ENCODE measurements at regions of chr5 and their contacts with region 1.

Region 1: GRCh38 chr5:64784451-64785025 is 15.8 kb downstream of the CWC27 start:
- DNase-seq: peak; percentile 80
- ATAC-seq: peak; percentile 68
- H3K4me3 Mint-ChIP-seq: no peak overlapping the region
- H3K27ac Mint-ChIP-seq: no peak overlapping the region
- H3K4me1 Mint-ChIP-seq: peaks cover 10% of the 10 kb centered on the region
- H3K27me3 Mint-ChIP-seq: no peaks in the 10 kb centered on the region

Region 2: DNA sequence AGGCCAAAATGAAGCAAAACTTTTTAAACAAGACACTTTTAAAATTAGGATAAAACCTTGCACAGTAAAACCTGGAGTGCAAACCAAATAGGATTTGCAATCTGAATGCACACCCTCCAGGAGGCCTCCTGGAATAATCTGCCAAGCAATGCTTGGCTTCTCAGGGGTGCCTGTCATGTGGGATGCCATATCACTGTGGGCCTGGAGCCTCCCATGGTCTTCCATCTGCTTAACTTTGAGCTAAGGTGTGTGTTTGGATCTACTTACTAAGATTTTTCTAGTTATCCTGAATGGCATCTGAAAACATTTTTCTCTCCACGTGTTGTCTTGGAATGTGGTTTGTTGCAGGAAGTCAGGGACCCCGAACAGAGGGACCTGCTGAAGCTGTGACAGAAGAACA is 226.6 kb before region 1 on chr5:
- CTCF ChIA-PET with region 1: no interaction called
- DNase-seq: no peak
- ATAC-seq: no peak
- H3K4me3 Mint-ChIP-seq: no peak overlapping the region
- H3K27ac Mint-ChIP-seq: no peak overlapping the region
- H3K4me1 Mint-ChIP-seq: no peaks in the 10 kb centered on the region
- H3K27me3 Mint-ChIP-seq: no peaks in the 10 kb centered on the region

Region 3: DNA sequence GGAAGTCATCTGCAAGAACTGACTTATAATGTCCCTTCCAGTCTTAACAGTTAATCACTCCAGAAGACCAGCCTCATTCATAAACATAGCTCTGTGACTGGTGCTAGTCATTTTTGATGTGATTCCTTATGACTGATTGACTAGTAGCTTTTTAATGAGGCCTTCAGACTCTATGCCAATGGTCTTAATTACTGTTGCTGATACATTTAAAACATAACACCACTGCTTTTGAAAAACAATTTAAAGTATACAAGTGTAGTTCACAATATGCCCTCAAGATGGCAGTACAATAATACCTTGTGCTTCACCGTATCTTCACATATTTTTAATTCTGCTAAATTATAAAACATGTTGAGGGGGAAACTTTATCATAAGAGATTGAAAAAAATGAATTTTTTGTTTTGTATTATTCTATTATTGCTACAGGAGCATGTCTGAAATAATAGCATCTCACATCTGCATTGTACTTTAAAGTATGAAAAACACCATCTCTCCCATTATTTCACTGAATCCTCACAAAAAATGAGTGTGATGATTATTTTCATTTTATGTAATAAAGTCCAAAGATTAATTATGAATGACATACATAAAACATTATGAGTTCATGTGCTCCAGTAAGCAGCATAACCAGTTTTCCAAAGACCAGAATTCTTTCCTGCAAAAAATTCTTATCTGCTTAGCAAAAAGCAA is 149.4 kb before region 1 on chr5:
- CTCF ChIA-PET with region 1: interaction called, 41 read pairs
- DNase-seq: no peak
- ATAC-seq: no peak
- H3K4me3 Mint-ChIP-seq: no peak overlapping the region
- H3K27ac Mint-ChIP-seq: no peak overlapping the region
- H3K4me1 Mint-ChIP-seq: peaks cover 11% of the 10 kb centered on the region
- H3K27me3 Mint-ChIP-seq: peaks cover 35% of the 10 kb centered on the region

Region 4: GRCh38 chr5:64768358-64769312 is 15.9 kb before region 1 on chr5 and contains the starts of genes CWC27 and SREK1IP1:
- CTCF ChIA-PET with region 1: interaction called, 21 read pairs
- DNase-seq: peak; percentile 91
- ATAC-seq: peak; percentile 96
- H3K4me3 Mint-ChIP-seq: peak within 1 kb of the TSS; percentile 96
- H3K27ac Mint-ChIP-seq: peak within 1 kb of the TSS; percentile 95
- H3K4me1 Mint-ChIP-seq: peaks cover 41% of the 10 kb centered on the region
- H3K27me3 Mint-ChIP-seq: no peaks in the 10 kb centered on the region
- total RNA-seq, gene CWC27: 24.2 to 27.0 TPM
- total RNA-seq, gene SREK1IP1: 25.2 to 28.8 TPM